Activated B cell treated with CpG ODN at 0.5 μM for 24 hours (primary cell): ENCODE measurements at regions of chr15 and their contacts with region 1.

Region 1: GRCh38 chr15:49589030-49589429 is 31.6 kb downstream of the FAM227B start:
- DNase-seq: no peak
- ATAC-seq: no peak
- H3K4me3 Mint-ChIP-seq: no peak overlapping the region
- H3K27ac Mint-ChIP-seq: no peak overlapping the region
- H3K4me1 Mint-ChIP-seq: no peaks in the 10 kb centered on the region
- H3K27me3 Mint-ChIP-seq: no peaks in the 10 kb centered on the region
- CTCF ChIP-seq: no peak

Region 2: GRCh38 chr15:49560045-49560444 is 29.0 kb before region 1 on chr15:
- CTCF ChIA-PET with region 1: no interaction called
- POLR2A ChIA-PET with region 1: no interaction called
- intact Hi-C with region 1: loop called (anchors 1 kb)
- DNase-seq: no peak
- ATAC-seq: no peak
- H3K4me3 Mint-ChIP-seq: no peak overlapping the region
- H3K27ac Mint-ChIP-seq: no peak overlapping the region
- H3K4me1 Mint-ChIP-seq: no peaks in the 10 kb centered on the region
- H3K27me3 Mint-ChIP-seq: no peaks in the 10 kb centered on the region
- CTCF ChIP-seq: no peak